CD4-positive, alpha-beta memory T cell (primary cell): ENCODE measurements at regions of chr3 and their contacts with region 1.

Region 1: GRCh38 chr3:44338010-44338827 is at the start of gene TCAIM:
- DNase-seq: peak; percentile 99 to 100 (median 100)
- H3K4me3 ChIP-seq: peak within 1 kb of the TSS; percentile 91
- H3K4me3 Mint-ChIP-seq: peak within 1 kb of the TSS; percentile 93 to 98 (median 98)
- H3K27ac ChIP-seq: peak within 1 kb of the TSS; percentile 95
- H3K27ac Mint-ChIP-seq: peak within 1 kb of the TSS; percentile 94 to 99 (median 99)
- H3K4me1 ChIP-seq: peaks cover 19% of the 10 kb centered on the region
- H3K4me1 Mint-ChIP-seq: peaks cover 20 to 36% (median 24%) of the 10 kb centered on the region in 4 donors
- H3K27me3 ChIP-seq: no peaks in the 10 kb centered on the region
- H3K27me3 Mint-ChIP-seq: peaks cover 0 to 10% of the 10 kb centered on the region in 2 donors
- total RNA-seq, gene TCAIM: 21.3 to 21.8 TPM

Region 2: GRCh38 chr3:43690400-43691119 is 647.7 kb before region 1 on chr3 and contains the start of gene ABHD5:
- CTCF ChIA-PET with region 1: no interaction called
- POLR2A ChIA-PET with region 1: interaction called, 3 read pairs
- intact Hi-C with region 1: loop called (anchors 2 kb)
- DNase-seq: peak; percentile 95 to 97 (median 96)
- H3K4me3 ChIP-seq: peak within 1 kb of the TSS; percentile 38 to 98
- H3K4me3 Mint-ChIP-seq: peak within 1 kb of the TSS; percentile 91 to 97 (median 93)
- H3K27ac ChIP-seq: peak within 1 kb of the TSS; percentile 79
- H3K27ac Mint-ChIP-seq: peak within 1 kb of the TSS; percentile 89 to 98 (median 94)
- H3K4me1 ChIP-seq: peaks cover 20% of the 10 kb centered on the region
- H3K4me1 Mint-ChIP-seq: peaks cover 23 to 35% (median 30%) of the 10 kb centered on the region in 4 donors
- H3K27me3 ChIP-seq: no peaks in the 10 kb centered on the region
- H3K27me3 Mint-ChIP-seq: no peaks in the 10 kb centered on the region
- total RNA-seq, gene ABHD5: 6.2 to 7.0 TPM

Region 3: DNA sequence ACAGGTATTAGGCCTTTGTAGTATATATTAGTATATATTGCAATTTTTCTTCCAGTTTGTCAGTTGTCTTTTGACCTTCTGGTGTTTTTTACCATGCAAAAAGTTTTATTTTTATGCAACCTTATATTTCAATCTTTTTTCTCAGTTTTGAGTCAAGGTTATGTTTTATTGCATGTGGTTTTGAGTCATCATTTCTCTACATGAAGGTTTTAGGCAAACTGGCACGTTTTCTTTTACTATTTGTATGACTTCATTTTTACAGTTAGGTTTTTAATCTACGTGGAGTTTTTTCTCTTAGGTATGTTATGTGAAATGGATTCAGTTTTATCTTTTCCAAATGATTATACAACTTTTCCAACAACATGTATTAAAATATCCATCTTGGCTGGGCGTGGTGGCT is 36.5 kb before region 1 on chr3:
- CTCF ChIA-PET with region 1: no interaction called
- POLR2A ChIA-PET with region 1: no interaction called
- intact Hi-C with region 1: no loop called
- DNase-seq: no peak
- H3K4me3 ChIP-seq: no peak overlapping the region
- H3K4me3 Mint-ChIP-seq: no peak overlapping the region
- H3K27ac ChIP-seq: no peak overlapping the region
- H3K27ac Mint-ChIP-seq: no peak overlapping the region
- H3K4me1 ChIP-seq: no peaks in the 10 kb centered on the region
- H3K4me1 Mint-ChIP-seq: no peaks in the 10 kb centered on the region
- H3K27me3 ChIP-seq: no peaks in the 10 kb centered on the region
- H3K27me3 Mint-ChIP-seq: peaks cover 0 to 9% of the 10 kb centered on the region in 2 donors

Region 4: DNA sequence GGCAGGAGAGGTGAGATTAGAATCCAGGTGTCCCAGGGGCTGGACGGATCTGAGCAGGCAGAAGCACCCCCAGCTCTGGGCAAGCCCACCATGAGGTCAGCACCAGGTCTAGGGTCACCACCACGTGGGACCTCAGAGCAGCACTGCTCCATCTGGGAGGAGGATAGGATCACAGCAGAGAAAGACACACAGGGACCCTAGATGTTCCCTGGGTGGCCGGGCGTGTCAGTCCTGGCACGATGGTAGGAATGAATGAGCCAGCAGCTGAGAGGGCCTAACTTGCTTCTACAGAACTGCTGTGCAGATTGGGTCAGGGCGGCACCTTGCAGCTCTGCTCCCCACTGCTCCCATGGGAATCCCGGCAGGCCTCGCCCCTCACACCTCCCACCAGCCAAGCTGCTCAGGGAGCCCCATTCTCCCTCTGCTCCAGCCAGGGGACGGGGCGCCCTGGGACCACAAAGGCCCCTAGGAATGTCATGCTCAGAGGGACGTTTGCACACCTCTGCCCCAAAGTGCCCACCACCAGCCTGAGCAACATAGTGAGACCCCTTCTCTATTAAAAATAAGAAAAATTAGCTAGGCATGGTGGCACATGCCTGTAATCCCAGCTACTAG is 72.9 kb after region 1 on chr3:
- CTCF ChIA-PET with region 1: no interaction called
- POLR2A ChIA-PET with region 1: no interaction called
- intact Hi-C with region 1: no loop called
- DNase-seq: no peak
- H3K4me3 ChIP-seq: no peak overlapping the region
- H3K4me3 Mint-ChIP-seq: no peak overlapping the region
- H3K27ac ChIP-seq: no peak overlapping the region
- H3K27ac Mint-ChIP-seq: no peak overlapping the region
- H3K4me1 ChIP-seq: no peaks in the 10 kb centered on the region
- H3K4me1 Mint-ChIP-seq: no peaks in the 10 kb centered on the region
- H3K27me3 ChIP-seq: no peaks in the 10 kb centered on the region
- H3K27me3 Mint-ChIP-seq: no peaks in the 10 kb centered on the region

Region 5: DNA sequence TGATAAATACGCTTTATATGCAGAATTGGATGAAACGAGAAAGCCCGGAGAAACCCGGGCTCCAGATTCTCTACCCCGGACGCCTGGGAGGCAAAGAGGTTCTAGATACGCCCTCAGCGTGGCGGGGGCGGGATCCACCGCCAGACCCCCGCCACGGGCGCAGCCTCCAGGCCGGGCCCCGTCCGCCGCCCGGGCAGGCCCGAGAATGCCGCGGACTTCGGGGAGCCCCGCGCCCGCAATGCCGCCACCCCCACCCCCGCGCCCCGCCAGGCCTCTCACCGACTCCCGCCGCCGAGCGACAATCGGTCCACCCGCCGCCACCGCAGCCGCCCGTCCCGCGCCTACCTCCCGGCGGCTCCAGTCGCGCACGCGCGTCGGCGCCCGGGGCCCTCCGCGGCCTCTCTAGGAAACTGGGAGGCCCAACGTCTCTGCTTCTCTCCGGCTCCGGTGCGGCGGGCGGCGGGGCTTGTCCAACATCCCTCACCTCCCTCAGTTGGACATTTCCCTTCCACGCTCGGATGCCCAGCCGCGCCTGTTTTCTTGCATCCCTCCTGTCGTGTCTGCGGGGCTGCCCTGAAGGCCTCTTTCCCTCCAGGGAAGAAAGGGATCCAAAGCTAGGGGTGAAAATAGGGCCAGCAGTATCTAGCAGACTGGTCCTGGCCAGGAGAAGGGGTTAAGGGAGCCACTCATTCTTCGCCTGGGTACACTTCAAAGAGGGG is 139.3 kb after region 1 on chr3 and contains the start of gene ZNF445:
- CTCF ChIA-PET with region 1: no interaction called
- POLR2A ChIA-PET with region 1: interaction called, 10 read pairs
- intact Hi-C with region 1: loop called (anchors 1 kb)
- DNase-seq: peak; percentile 72 to 82 (median 81)
- H3K4me3 ChIP-seq: peak within 1 kb of the TSS; percentile 44 to 68
- H3K4me3 Mint-ChIP-seq: peak within 1 kb of the TSS; percentile 93 to 98 (median 94)
- H3K27ac ChIP-seq: peak within 1 kb of the TSS; percentile 42
- H3K27ac Mint-ChIP-seq: peak within 1 kb of the TSS; percentile 79 to 96 (median 90)
- H3K4me1 ChIP-seq: peaks cover 28% of the 10 kb centered on the region
- H3K4me1 Mint-ChIP-seq: peaks cover 17 to 50% (median 32%) of the 10 kb centered on the region in 4 donors
- H3K27me3 ChIP-seq: no peaks in the 10 kb centered on the region
- H3K27me3 Mint-ChIP-seq: no peaks in the 10 kb centered on the region
- total RNA-seq, gene ZNF445: 30.0 to 31.5 TPM

Region 6: DNA sequence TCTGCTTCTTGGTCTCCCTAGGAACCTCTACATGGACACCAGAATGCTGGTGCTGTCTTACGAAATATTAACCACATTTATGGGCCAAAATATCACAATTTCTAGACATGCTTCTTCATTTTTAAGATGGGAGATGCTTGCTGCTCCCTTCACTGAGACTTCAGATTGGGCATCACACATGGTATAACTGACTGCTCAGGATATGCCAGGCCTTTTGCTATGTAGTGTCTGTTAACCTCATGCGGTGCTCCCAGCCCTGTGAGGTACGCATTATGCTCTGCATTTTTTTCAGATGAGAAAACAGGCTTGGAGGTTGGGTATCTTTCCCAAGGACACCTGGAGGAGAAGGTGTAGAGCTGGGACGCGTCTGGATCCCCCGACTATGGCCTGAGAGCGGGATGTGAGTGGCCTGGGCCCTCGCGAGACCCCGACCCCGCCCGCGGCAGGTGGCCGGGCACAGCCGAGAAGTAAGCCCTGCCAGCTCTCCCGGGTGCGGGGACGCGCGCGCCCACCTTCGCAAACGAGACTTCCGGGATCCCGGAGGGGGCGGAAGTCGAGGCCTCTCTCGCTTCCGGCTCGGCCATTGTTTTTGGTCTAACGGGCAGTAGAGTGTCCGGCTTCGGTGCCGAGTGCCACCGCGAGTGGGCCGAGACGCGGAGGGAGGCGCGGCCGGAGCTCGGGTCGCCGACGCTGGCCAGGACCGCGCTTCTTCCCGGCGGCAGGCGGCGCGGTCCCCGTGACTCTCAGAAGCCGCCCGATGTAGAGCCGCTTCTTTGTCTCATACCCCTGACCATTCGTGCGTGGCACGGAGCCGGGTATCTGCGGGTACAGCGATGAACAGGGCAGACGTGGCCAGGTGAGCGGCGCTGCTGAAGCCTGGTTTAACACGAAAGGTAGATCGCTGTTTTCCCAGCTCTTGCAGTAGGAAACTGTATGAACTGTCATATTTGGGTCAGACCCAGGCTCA is 216.7 kb after region 1 on chr3 and contains the start of gene ZKSCAN7:
- CTCF ChIA-PET with region 1: no interaction called
- POLR2A ChIA-PET with region 1: interaction called, 10 read pairs
- intact Hi-C with region 1: no loop called
- DNase-seq: peak in 4 of 5 donors; percentile 15 to 38 (median 31)
- H3K4me3 ChIP-seq: peak within 1 kb of the TSS; percentile 81 to 88
- H3K4me3 Mint-ChIP-seq: peak within 1 kb of the TSS; percentile 87 to 96 (median 92)
- H3K27ac ChIP-seq: peak within 1 kb of the TSS; percentile 38
- H3K27ac Mint-ChIP-seq: peak within 1 kb of the TSS; percentile 43 to 95 (median 90)
- H3K4me1 ChIP-seq: peaks cover 10% of the 10 kb centered on the region
- H3K4me1 Mint-ChIP-seq: peaks cover 14 to 22% (median 17%) of the 10 kb centered on the region in 4 donors
- H3K27me3 ChIP-seq: no peaks in the 10 kb centered on the region
- H3K27me3 Mint-ChIP-seq: peaks cover 0 to 4% of the 10 kb centered on the region in 2 donors
- total RNA-seq, gene ZKSCAN7: 4.1 to 4.2 TPM

Region 7: DNA sequence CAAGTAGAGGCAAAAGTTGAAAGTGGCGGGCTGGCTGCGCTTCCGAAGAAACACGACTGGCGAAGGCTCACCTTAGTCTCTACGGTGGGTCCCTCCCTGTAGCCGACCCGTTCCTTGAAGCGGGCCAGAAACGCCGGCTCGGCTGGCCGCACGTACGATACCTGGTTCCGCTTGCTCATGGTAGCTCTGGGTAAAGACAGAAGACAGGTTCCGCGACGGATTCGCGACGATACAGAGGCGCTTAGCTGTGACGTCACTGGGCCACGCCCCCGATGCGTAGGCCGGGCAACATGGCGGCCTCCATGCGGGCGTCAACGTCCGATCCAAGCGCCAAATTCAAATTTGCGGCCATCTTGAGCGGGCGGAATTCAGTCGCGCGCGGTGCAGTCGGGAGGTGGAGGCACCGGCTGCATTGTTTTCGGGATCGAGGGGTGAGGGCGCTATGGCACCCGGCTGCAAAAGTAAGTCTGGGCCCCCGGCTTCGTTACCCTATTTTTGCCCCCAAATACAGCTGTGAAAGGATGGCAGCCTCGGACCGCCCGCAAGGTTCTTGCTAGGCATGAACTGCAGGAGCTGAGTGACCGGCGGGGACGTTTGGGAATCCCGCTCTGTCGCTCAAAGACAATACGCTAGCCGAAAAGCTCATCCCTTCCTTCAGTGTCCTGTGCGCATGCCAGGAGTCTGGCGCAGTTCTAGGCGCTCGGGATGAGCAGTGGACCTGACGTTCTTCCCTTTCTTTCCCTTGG is 423.4 kb after region 1 on chr3 and contains the starts of genes KIAA1143 and KIF15:
- CTCF ChIA-PET with region 1: interaction called, 3 read pairs
- POLR2A ChIA-PET with region 1: interaction called, 8 read pairs
- intact Hi-C with region 1: loop called (anchors 1 kb)
- DNase-seq: peak; percentile 92 to 96 (median 93)
- H3K4me3 ChIP-seq: peak within 1 kb of the TSS; percentile 71 to 98
- H3K4me3 Mint-ChIP-seq: peak within 1 kb of the TSS; percentile 86 to 98 (median 92)
- H3K27ac ChIP-seq: peak within 1 kb of the TSS; percentile 84
- H3K27ac Mint-ChIP-seq: peak within 1 kb of the TSS; percentile 92 to 97 (median 94)
- H3K4me1 ChIP-seq: peaks cover 23% of the 10 kb centered on the region
- H3K4me1 Mint-ChIP-seq: peaks cover 21 to 42% (median 33%) of the 10 kb centered on the region in 4 donors
- H3K27me3 ChIP-seq: no peaks in the 10 kb centered on the region
- H3K27me3 Mint-ChIP-seq: peaks cover 0 to 1% of the 10 kb centered on the region in 2 donors
- total RNA-seq, gene KIAA1143: 37.6 to 39.7 TPM
- total RNA-seq, gene KIF15: 0.19 to 0.38 TPM